A673 (cell line): ENCODE measurements at regions of chr16 and their contacts with region 1.

Region 1: DNA sequence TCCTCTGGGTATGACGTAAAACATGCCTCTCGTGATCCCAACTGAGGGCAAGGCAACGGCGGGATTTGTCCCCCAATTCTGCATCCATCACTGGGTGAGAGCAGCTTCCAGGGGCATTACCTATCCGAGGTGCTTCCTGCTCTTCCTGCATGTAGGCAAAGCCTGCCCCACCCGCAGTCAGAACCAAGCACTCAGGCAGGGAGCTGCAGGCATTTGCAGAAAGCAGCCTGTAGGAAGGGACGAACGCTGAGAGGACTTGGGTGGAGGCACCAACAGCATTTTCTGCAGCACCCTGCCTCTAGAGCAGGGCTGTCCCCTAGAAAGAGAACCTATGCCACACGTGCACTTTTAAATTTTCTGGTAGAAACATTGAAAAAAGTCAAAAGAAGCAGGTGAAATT is 5.5 kb downstream of the BCO1 start:
- DNase-seq: no peak
- H3K4me3 ChIP-seq: no peak overlapping the region
- H3K27ac ChIP-seq: no peak overlapping the region
- H3K4me1 ChIP-seq: peaks cover 9% of the 10 kb centered on the region
- H3K27me3 ChIP-seq: no peaks in the 10 kb centered on the region
- CTCF ChIP-seq: no peak

Region 2: GRCh38 chr16:81223391-81223829 is 20.5 kb before region 1 on chr16:
- CTCF ChIA-PET with region 1: no interaction called
- POLR2A ChIA-PET with region 1: no interaction called
- intact Hi-C with region 1: no loop called
- DNase-seq: no peak
- H3K4me3 ChIP-seq: no peak overlapping the region
- H3K27ac ChIP-seq: no peak overlapping the region
- H3K4me1 ChIP-seq: no peaks in the 10 kb centered on the region
- H3K27me3 ChIP-seq: no peaks in the 10 kb centered on the region
- CTCF ChIP-seq: no peak

Region 3: DNA sequence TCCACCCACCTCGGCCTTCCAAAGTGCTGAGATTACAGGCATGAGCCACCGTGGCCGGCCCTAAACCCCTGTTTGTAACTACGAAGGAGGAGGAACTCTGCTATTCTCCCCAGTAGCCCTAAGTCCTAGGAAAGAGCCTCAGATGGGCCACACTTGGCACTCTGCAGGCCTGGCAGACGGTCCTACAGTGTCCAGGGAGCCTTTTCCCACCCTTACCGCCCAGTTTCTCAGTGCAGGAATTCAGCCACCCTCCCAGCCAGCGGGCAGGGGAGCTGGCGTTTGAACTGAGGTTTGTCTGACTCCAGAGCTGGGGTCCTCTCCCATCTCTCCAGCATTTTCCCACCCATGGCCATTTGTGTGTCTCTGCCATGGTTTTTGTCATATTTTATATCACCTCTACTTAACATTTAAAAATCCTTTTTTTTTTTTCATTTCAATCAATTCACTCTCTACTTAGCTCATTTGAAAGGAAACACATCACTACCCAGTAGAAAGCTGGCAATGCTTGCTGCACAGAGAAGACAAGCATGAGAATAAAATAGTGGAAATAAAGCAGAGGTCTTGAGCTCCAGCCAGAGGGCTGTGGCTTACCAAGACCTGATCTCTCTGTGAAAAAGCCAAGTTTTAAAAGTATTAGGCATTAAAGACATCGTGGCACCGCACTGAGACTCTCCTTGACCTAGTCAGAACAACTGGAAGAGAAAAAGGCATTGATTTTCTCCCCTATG is 29.4 kb after region 1 on chr16:
- CTCF ChIA-PET with region 1: no interaction called
- POLR2A ChIA-PET with region 1: interaction called, 22 read pairs
- intact Hi-C with region 1: no loop called
- DNase-seq: no peak
- H3K4me3 ChIP-seq: no peak overlapping the region
- H3K27ac ChIP-seq: no peak overlapping the region
- H3K4me1 ChIP-seq: no peaks in the 10 kb centered on the region
- H3K27me3 ChIP-seq: no peaks in the 10 kb centered on the region
- CTCF ChIP-seq: no peak